Posterior cingulate gyrus (tissue), 11 donors: ENCODE measurements at regions of chr12 and their contacts with region 1.

Region 1: DNA sequence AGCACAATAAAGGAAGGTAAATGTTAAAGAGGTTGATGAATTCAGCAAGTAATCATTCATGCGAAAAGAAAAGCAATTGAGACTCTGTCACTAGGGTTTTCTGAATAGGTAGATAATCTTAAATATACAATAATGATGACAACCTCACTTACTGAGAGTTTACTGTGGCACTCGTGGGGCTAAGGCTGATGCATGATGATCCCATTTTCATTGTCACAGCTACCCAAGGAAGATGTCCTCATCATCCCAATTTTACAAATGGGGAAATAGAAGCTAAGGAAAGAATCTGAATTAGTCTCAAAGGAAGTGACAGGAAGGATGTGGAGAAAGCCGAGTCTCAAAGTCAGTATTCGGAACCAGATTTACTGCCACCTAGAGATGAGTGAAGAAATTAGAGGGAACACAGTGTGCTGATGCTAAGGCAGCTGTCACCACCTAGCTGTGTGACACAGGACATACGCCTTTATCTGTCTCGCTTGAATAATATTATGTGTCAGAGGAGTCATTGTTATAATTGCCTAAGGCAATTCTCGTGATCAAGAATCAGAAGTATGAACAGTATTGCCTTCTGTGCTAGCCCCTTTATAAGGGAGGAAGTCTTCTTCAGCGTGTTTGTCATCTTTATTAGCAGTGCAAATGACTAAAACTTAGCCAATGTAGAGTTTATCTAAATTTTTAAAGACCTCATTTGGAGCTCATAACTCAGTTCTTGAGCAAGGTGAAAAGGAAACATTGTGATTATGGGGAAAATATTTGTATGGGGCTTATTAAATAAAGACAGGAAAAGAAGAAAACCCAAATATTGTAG is 63.2 kb downstream of the ERGIC2 start:
- DNase-seq: peak in 6 of 10 donors; percentile 36 to 91 (median 42)

Region 2: GRCh38 chr12:29073628-29074239 is 244.0 kb before region 1 on chr12:
- intact Hi-C with region 1: loop called (anchors 1 kb)
- DNase-seq: peak in 1 of 10 donors; percentile 11

Region 3: GRCh38 chr12:29350080-29350479 is 32.3 kb after region 1 on chr12:
- intact Hi-C with region 1: no loop called
- DNase-seq: no peak

Region 4: DNA sequence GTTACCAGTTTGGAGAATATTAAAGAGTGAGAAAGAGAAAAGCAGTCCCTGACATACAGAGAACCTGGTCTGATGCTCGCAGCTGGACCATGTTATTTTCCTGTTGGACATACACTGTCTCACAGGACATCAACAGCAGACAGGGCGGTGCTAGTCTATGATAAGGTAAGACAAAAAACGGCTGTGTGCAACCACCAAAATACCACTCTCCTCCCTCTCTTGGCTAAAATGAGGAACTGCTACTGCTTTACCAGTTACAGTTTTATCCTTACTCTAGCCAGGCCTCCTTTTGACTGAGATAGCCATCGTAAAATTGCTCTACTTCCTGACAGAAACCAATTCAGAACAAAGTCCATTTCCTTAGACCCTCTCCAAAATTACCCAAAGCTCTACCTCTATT is 110.2 kb after region 1 on chr12:
- intact Hi-C with region 1: no loop called
- DNase-seq: no peak

Region 5: GRCh38 chr12:30806989-30807694 is 1489.4 kb after region 1 on chr12:
- intact Hi-C with region 1: loop called (anchors 10 kb)
- DNase-seq: peak in 2 of 10 donors; percentile 18 to 79